Left ventricle myocardium superior (tissue), 1 donor: ENCODE measurements at regions of chr19 and their contacts with region 1.

Region 1: DNA sequence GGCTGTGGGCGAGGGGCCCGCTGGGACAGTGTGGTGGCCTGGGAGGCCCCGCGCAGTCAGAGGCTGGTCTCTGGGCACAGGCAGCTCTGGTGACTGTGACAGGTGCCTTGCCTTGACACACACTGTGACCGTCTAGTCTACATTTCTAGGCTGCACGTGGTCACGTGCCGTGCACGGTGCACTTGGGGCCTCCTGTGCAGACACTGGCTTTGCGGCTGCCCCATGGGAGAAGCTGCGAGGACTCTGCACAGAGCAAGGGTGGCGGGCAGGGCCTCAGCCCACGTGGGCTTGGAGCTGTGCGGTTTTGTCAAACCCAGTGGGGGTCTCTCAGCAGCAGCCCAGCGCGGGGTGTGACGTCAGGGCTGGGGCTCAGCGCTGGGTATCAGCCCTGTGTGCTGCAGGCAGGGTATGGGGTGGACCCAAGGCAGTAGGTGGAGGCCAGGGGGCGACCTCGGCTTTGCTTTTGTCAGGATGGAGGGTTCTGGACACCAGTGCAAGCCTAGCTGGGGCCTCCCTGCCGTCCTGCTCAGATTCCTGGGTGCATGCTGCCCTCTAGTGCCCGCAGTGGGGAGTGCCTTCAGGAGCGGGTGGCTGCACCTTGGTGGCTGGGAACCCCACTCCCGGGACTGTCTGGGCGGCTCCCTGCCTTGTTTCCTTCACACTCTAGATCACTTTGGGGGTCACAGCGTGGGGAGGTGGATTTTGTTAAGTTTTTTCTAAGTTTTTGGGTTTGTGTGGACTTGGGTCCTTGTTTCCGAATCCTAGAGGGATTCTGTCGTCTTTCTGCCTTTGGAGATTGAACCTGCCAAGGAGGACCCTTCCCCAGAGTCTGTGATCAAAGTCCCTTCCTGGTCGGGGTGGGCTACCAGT is 62.6 kb downstream of the KDM4B start:
- DNase-seq: peak; percentile 89
- ATAC-seq: peak; percentile 86

Region 2: DNA sequence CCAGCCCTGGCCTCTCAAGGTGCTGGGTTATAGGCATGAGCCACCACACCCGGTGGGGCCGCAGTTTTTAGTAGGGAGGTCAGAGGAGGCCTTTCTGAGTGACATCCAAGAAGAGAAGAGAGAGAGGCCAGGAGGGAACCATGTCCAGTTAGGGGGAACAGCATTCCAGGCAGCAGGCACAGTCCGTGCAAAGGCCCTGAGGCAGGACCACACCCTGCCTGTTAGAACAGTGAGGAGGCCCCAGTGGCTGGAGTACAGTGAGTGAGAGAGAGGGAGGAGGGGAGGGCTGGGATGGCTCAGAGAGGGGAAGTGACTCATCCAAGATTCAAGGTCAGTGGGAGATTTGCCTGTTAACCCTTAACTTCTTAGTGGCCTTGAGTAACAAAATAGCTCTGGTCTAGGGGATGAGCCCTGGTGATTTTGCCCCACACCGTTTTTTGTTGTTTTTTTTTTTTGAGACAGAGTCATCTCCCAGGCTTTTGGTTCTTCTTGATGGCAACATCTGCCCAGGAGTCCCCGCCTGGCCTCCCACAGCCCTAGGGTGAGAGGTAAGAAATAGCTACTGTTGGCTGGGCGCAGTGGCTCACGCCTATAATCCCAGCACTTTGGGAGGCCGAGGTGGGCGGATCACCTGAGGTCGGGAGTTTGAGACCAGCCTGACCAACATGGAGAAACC is 161.3 kb before region 1 on chr19:
- intact Hi-C with region 1: loop called (anchors 10 kb)
- DNase-seq: peak; percentile 38
- ATAC-seq: no peak

Region 3: DNA sequence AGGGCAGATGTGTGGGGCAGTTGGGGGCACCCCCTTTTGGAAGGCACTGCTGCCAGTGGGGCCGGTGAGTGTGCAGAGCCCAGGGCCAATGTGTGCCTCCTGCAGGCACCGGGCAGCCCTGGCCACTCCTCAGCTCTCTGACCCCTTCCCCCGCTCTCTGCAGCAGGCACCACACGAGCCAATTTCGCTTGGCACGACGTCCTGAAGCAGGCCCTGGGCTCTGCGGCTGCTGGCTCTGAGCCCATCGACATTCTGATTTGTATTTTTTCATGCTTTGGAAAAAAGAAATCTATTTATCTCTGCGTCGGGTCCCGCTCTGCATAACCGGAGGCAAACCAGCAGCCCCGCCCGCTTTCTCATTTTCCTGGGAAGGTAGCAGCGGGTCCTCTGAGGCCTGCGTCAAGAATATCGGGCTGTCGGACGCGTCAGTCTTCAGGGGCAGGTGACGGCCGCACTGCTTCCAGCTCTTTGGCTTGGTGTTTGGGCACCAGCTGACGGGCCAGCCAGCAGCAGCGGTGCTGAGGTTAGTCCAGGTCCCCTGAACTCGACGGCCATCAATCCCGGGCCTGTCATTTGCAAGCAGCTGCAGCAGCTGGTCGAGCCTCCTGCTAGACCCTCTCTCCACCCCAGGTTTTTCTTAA is 71.7 kb after region 1 on chr19:
- intact Hi-C with region 1: no loop called
- DNase-seq: peak; percentile 78
- ATAC-seq: peak; percentile 81